IMR-90 (cell line): ENCODE measurements at regions of chr12 and their contacts with region 1.

Region 1: GRCh38 chr12:58732894-58733293 is 187.4 kb downstream of the LRIG3 start:
- DNase-seq: peak; percentile 17
- ATAC-seq: no peak
- H3K4me3 ChIP-seq: no peak overlapping the region
- H3K27ac ChIP-seq: no peak overlapping the region
- H3K4me1 ChIP-seq: no peaks in the 10 kb centered on the region
- H3K27me3 ChIP-seq: no peaks in the 10 kb centered on the region
- CTCF ChIP-seq: no peak
- POLR2A ChIP-seq: no peak
- RAD21 ChIP-seq: no peak

Region 2: DNA sequence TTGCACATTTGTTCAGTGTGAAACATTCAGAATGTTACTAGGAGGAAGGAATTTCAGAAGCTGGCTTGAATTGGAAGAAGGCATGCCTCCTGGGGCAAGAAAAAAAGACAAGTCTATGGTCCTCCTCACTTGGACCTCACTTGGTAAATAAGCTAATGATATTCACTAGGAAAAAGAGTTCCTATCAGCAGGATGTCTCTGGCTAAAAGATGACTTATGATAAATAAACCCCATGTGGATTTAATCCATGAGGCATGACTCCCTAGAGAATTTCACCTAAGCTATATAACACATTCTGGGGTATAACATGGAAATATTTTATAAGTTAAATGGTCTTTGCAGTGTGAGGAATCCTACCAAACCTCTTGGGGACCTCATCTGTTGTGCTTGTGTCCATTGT is 12.5 kb before region 1 on chr12:
- CTCF ChIA-PET with region 1: no interaction called
- POLR2A ChIA-PET with region 1: no interaction called
- dilution Hi-C with region 1: no loop called
- in situ Hi-C with region 1: no loop called
- intact Hi-C with region 1: no loop called
- DNase-seq: no peak
- ATAC-seq: no peak
- H3K4me3 ChIP-seq: no peak overlapping the region
- H3K27ac ChIP-seq: no peak overlapping the region
- H3K4me1 ChIP-seq: no peaks in the 10 kb centered on the region
- H3K27me3 ChIP-seq: no peaks in the 10 kb centered on the region
- CTCF ChIP-seq: no peak
- POLR2A ChIP-seq: no peak
- RAD21 ChIP-seq: no peak

Region 3: DNA sequence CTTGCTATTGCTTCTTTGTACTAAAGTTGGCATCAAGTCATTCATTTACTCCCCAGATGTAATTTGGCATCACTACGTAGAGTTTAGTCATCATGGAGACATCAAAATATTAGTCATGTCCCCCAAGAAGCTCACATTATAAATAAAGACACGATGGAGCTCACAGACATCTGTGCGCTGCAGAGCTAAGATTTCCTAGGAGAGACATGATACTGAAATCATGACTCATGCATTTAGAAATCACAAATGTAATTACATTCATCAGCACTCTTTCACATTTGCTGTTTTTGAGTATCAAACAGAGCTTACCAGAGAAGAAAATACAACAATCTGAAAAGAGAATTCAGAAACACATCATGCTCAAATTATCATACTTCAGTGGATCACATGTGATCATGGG is 17.6 kb after region 1 on chr12:
- CTCF ChIA-PET with region 1: no interaction called
- POLR2A ChIA-PET with region 1: no interaction called
- dilution Hi-C with region 1: no loop called
- in situ Hi-C with region 1: no loop called
- intact Hi-C with region 1: loop called (anchors 2 kb)
- DNase-seq: peak; percentile 98
- ATAC-seq: peak; percentile 88
- H3K4me3 ChIP-seq: no peak overlapping the region
- H3K27ac ChIP-seq: no peak overlapping the region
- H3K4me1 ChIP-seq: no peaks in the 10 kb centered on the region; the same call in 1 of the 2 replicates
- H3K27me3 ChIP-seq: no peaks in the 10 kb centered on the region
- CTCF ChIP-seq: no peak
- POLR2A ChIP-seq: no peak
- RAD21 ChIP-seq: peak; percentile 9; the same call in 1 of the 2 replicates